ENCODE measurements at regions of chr7 and their contacts with region 1.

Region 1: GRCh38 chr7:106009403-106010226 is 46.6 kb downstream of the CDHR3 start:
- DNase-seq: peak; percentile 92 to 93
- ATAC-seq: peak; percentile 98

Region 2: GRCh38 chr7:105759670-105760550 is 249.7 kb before region 1 on chr7:
- intact Hi-C with region 1: loop called (anchors 10 kb)
- DNase-seq: peak in 1 of 2 donors; percentile 69
- ATAC-seq: peak; percentile 57

Region 3: DNA sequence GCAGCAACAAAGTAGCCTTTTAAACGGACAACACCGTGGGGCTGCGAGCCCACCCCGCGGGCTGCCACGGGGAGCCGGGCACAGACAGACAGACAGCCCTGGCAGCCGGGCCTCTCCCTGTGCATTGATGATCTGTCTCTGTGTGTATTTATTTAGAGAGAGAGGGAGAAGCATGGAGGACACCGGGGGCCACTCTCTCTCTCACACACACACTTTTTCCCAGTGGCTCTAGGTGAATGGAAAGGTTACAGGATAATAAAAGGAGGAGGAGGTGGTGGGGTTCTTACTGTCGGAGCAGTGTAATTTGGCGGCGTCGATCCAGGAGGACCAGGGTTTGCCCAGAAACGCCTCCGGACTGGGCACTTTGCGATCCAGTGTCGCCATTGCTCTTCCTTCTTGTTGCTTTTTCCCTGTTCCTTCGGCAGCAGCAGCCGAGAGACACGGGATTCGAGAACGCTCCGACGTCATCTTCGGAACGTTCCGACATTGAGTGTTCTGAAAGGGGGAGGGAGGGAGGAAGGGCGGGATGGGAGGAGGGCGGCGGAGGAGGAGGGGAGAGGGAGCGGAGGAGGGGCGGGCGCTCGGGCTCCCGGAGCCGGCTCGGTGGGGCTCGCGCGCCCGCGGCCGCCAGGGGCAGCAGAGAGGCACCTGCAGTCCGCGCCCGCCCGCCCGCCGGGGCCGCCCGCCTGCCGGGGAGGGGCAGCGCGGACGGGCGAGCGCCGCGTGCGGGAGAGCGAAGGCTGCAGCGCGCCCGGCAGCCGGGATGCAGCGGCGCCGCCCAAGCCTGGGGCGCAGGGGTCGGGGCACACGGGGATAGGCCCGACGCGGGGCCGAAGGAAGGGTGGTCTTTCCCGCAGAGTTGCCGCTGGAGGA is 133.3 kb before region 1 on chr7 and contains the start of gene ATXN7L1:
- intact Hi-C with region 1: loop called in 1 of 2 experiments (anchors 5 kb)
- DNase-seq: peak; percentile 94 to 97
- ATAC-seq: peak; percentile 85
- total RNA-seq, gene ATXN7L1: 19.6 to 22.1 TPM

Region 4: GRCh38 chr7:105934572-105935185 is 74.9 kb before region 1 on chr7:
- intact Hi-C with region 1: loop called in 1 of 2 experiments (anchors 10 kb)
- DNase-seq: no peak
- ATAC-seq: peak; percentile 76

Region 5: GRCh38 chr7:106332201-106332600 is 322.6 kb after region 1 on chr7:
- intact Hi-C with region 1: no loop called
- DNase-seq: no peak
- ATAC-seq: no peak